T-cell (primary cell): ENCODE measurements at regions of chr1 and their contacts with region 1.

Region 1: DNA sequence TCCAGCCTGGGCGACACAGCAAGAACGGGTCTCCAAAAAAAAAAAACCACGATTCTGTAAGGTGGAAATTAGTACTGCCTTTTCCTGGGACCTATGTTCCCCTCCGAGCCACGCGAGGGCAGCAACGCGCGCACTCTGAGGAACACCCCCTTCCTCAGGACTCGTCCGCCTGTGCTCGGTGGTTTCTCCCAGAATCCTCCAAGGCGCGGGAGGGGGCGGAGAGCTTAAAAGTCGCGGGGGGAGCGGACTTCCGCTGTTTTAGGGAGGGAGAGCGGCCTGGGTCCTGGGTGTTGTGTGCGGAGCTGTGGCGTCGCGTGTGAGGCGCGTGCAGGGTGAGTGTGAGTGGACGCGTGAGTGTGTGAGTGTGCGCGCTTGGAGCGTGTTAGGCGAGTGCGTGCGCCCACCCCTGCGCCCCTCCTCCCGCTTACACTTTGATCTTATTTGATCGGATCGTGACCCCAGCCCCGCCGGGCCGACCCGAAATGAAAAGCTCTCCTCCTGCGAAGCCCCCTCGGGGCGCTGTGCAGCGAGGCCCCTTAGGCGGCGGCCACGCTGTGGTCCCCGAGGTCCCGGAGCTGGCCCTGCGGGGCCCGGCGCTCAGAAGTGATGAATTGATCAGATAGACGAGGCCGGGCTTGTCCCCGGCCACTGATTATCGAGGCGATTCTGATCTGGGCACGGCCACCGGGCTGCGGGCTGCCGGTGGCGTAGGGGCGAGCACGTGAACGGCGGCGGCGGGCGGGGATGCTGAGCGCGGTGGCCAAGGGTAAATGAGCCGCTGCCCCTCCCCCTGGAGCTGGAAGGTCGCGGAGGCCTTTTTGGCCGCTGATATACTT is 9.6 kb downstream of the TMEM167B start:
- DNase-seq: peak; percentile 92 to 98 (median 96)
- ATAC-seq: peak; percentile 92 to 96 (median 94)
- H3K4me3 ChIP-seq: peak overlapping the region; percentile 79 to 97
- H3K4me3 Mint-ChIP-seq: peak overlapping the region; percentile 92 to 96 (median 94)
- H3K27ac ChIP-seq: peak overlapping the region; percentile 84
- H3K27ac Mint-ChIP-seq: peak overlapping the region; percentile 96 to 97
- H3K4me1 ChIP-seq: peaks cover 2 to 21% of the 10 kb centered on the region in 2 experiments
- H3K4me1 Mint-ChIP-seq: peaks cover 9 to 16% (median 13%) of the 10 kb centered on the region in 3 donors
- H3K27me3 ChIP-seq: no peaks in the 10 kb centered on the region
- H3K27me3 Mint-ChIP-seq: no peaks in the 10 kb centered on the region

Region 2: GRCh38 chr1:108657356-108658080 is 442.6 kb before region 1 on chr1:
- CTCF ChIA-PET with region 1: no interaction called
- POLR2A ChIA-PET with region 1: no interaction called
- DNase-seq: no peak
- ATAC-seq: no peak
- H3K4me3 ChIP-seq: no peak overlapping the region
- H3K4me3 Mint-ChIP-seq: no peak overlapping the region
- H3K27ac ChIP-seq: no peak overlapping the region
- H3K27ac Mint-ChIP-seq: peak overlapping the region; percentile 67 to 77
- H3K4me1 ChIP-seq: peaks cover 8 to 24% of the 10 kb centered on the region in 2 experiments
- H3K4me1 Mint-ChIP-seq: peaks cover 27 to 47% (median 36%) of the 10 kb centered on the region in 3 donors
- H3K27me3 ChIP-seq: no peaks in the 10 kb centered on the region
- H3K27me3 Mint-ChIP-seq: no peaks in the 10 kb centered on the region

Region 3: GRCh38 chr1:108916788-108917187 is 183.4 kb before region 1 on chr1:
- CTCF ChIA-PET with region 1: no interaction called
- POLR2A ChIA-PET with region 1: no interaction called
- DNase-seq: no peak
- ATAC-seq: no peak
- H3K4me3 ChIP-seq: no peak overlapping the region
- H3K4me3 Mint-ChIP-seq: no peak overlapping the region
- H3K27ac ChIP-seq: no peak overlapping the region
- H3K27ac Mint-ChIP-seq: no peak overlapping the region
- H3K4me1 ChIP-seq: no peaks in the 10 kb centered on the region
- H3K4me1 Mint-ChIP-seq: no peaks in the 10 kb centered on the region
- H3K27me3 ChIP-seq: no peaks in the 10 kb centered on the region
- H3K27me3 Mint-ChIP-seq: no peaks in the 10 kb centered on the region

Region 4: GRCh38 chr1:109075531-109076490 is 24.3 kb before region 1 on chr1 and contains the start of gene TAF13:
- CTCF ChIA-PET with region 1: interaction called, 4 to 18 read pairs
- POLR2A ChIA-PET with region 1: interaction called, 4 to 5 read pairs
- DNase-seq: peak; percentile 66 to 91 (median 81)
- ATAC-seq: peak; percentile 98 to 100 (median 98)
- H3K4me3 ChIP-seq: peak within 1 kb of the TSS; percentile 60 to 82
- H3K4me3 Mint-ChIP-seq: peak within 1 kb of the TSS; percentile 89 to 97 (median 94)
- H3K27ac ChIP-seq: peak within 1 kb of the TSS; percentile 97
- H3K27ac Mint-ChIP-seq: peak within 1 kb of the TSS; percentile 96
- H3K4me1 ChIP-seq: peaks cover 3 to 7% of the 10 kb centered on the region in 2 experiments
- H3K4me1 Mint-ChIP-seq: peaks cover 22 to 24% (median 24%) of the 10 kb centered on the region in 3 donors
- H3K27me3 ChIP-seq: no peaks in the 10 kb centered on the region
- H3K27me3 Mint-ChIP-seq: no peaks in the 10 kb centered on the region
- total RNA-seq, gene TAF13: 8.7 to 19.4 (median 9.7) TPM

Region 5: DNA sequence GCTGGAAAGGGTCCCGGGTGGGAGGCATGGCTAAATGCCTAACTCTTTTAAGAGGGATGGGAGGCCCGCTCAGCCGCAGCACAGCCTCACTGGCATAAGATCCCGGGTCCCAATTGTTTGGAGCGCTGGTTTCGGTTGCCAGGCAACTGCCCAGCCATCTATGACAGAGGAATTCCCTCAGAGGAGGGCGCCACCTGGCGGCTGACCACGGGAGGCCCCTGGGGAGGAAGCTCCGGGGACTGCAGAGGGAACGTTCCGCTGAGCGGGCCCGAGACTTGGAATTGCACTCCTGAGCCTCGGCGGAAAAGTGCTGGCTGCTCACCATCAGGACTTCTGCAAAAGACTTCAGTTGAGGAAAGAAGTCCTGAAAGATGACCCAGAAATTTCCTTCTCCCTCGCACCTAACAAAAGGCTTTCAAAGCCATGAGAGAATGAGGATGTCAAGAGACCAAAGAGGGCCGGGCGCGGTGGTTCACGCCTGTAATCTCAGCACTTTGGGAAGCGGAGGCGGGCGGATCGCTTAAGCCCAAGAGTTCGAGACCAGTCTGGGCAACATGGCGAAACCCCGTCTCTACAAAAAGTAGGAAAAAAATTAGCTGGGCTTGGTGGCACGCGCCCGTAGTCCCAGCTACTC is 12.6 kb after region 1 on chr1:
- CTCF ChIA-PET with region 1: interaction called, 26 to 73 read pairs
- POLR2A ChIA-PET with region 1: interaction called, 5 to 6 read pairs
- DNase-seq: peak; percentile 65 to 94 (median 83)
- ATAC-seq: peak; percentile 50 to 63 (median 56)
- H3K4me3 ChIP-seq: peak overlapping the region; percentile 58 to 60
- H3K4me3 Mint-ChIP-seq: peak overlapping the region; percentile 82 to 97 (median 84)
- H3K27ac ChIP-seq: peak overlapping the region; percentile 47
- H3K27ac Mint-ChIP-seq: peak overlapping the region; percentile 81 to 83
- H3K4me1 ChIP-seq: peaks cover 5 to 24% of the 10 kb centered on the region in 2 experiments
- H3K4me1 Mint-ChIP-seq: peaks cover 28 to 32% (median 30%) of the 10 kb centered on the region in 3 donors
- H3K27me3 ChIP-seq: no peaks in the 10 kb centered on the region
- H3K27me3 Mint-ChIP-seq: peaks cover 0 to 5% of the 10 kb centered on the region in 2 donors

Region 6: GRCh38 chr1:109137964-109138741 is 38.0 kb after region 1 on chr1:
- CTCF ChIA-PET with region 1: no interaction called
- POLR2A ChIA-PET with region 1: no interaction called
- DNase-seq: no peak
- ATAC-seq: no peak
- H3K4me3 ChIP-seq: no peak overlapping the region
- H3K4me3 Mint-ChIP-seq: no peak overlapping the region
- H3K27ac ChIP-seq: no peak overlapping the region
- H3K27ac Mint-ChIP-seq: no peak overlapping the region
- H3K4me1 ChIP-seq: peaks cover 0 to 3% of the 10 kb centered on the region in 2 experiments
- H3K4me1 Mint-ChIP-seq: peaks cover 5 to 13% (median 12%) of the 10 kb centered on the region in 3 donors
- H3K27me3 ChIP-seq: no peaks in the 10 kb centered on the region
- H3K27me3 Mint-ChIP-seq: no peaks in the 10 kb centered on the region

Region 7: GRCh38 chr1:109412551-109412950 is 312.4 kb after region 1 on chr1:
- CTCF ChIA-PET with region 1: no interaction called
- POLR2A ChIA-PET with region 1: no interaction called
- DNase-seq: no peak
- ATAC-seq: no peak
- H3K4me3 ChIP-seq: no peak overlapping the region
- H3K4me3 Mint-ChIP-seq: no peak overlapping the region
- H3K27ac ChIP-seq: no peak overlapping the region
- H3K27ac Mint-ChIP-seq: no peak overlapping the region
- H3K4me1 ChIP-seq: no peaks in the 10 kb centered on the region
- H3K4me1 Mint-ChIP-seq: peaks cover 45 to 51% (median 48%) of the 10 kb centered on the region in 3 donors
- H3K27me3 ChIP-seq: no peaks in the 10 kb centered on the region
- H3K27me3 Mint-ChIP-seq: no peaks in the 10 kb centered on the region